ENCODE measurements at regions of chr6 and their contacts with region 1.

Region 1: DNA sequence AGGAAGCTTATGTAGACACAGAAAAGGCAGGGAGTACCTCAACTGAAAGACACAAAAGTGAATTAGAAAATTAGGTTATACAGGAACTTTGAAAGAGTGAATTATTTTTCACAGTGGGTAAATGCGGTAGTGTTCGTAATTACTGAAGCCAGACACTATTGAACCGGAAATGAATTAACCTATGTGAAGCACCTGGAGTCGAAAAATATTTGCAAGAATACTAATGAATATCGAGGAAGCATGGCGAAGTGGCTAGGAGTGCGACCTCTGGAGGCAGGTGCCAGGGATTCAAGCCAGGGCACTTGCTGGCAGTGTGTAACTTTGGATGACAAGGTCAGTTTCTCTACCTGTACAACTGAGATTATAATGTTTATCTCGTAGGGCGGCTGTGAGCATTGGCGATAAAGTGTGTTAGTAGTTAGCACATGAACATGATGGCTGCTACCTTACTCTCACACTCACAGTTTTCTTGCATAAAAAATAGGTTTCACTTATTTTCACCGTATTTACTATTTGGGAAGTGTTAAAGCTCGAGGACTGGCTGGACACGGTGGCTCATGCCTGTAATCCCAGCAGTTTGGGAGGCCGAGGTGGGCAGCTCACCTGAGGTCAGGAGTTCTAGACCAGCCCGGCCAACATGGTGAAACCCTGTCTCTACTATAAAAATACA is 567 bp upstream of the SLC18B1 start:
- DNase-seq: peak; percentile 84
- H3K4me3 Mint-ChIP-seq: no peak overlapping the region
- H3K27ac Mint-ChIP-seq: no peak overlapping the region
- H3K4me1 Mint-ChIP-seq: peaks cover 19% of the 10 kb centered on the region
- H3K27me3 Mint-ChIP-seq: no peaks in the 10 kb centered on the region

Region 2: DNA sequence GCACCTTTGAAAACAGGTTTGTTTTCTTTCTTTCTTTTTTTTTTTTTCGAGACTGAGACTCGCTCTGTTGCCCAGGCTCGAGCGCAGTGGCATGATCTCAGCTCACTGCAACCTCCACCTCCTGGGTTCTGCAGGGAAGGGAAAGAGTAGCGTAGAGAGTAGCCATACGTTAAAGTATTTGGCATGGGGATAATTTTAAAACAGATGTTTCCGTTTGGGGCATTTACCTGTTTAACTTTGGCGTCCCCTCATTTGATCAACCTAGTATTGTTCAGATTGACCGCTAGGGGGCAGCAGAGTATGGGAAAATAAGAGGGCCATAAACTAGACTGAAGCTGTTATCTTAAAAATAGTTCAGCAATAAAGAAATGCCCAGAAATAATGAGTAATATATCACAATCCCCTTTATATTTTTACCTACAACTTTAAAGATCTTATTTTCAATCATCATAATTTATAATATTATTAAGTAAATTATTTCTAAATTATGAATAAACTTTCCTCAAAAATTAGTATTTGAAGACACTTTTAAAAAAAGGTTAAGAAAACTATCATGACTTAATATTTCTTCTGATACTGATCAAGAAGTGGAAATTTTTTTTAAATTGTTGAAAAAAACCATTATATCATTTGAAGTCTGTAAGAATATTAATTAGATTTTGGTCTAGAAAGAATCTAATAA is 268.6 kb before region 1 on chr6:
- CTCF ChIA-PET with region 1: interaction called, 15 read pairs
- POLR2A ChIA-PET with region 1: no interaction called
- intact Hi-C with region 1: loop called (anchors 1 kb)
- DNase-seq: peak; percentile 69
- H3K4me3 Mint-ChIP-seq: no peak overlapping the region
- H3K27ac Mint-ChIP-seq: no peak overlapping the region
- H3K4me1 Mint-ChIP-seq: no peaks in the 10 kb centered on the region
- H3K27me3 Mint-ChIP-seq: peaks cover 7% of the 10 kb centered on the region

Region 3: DNA sequence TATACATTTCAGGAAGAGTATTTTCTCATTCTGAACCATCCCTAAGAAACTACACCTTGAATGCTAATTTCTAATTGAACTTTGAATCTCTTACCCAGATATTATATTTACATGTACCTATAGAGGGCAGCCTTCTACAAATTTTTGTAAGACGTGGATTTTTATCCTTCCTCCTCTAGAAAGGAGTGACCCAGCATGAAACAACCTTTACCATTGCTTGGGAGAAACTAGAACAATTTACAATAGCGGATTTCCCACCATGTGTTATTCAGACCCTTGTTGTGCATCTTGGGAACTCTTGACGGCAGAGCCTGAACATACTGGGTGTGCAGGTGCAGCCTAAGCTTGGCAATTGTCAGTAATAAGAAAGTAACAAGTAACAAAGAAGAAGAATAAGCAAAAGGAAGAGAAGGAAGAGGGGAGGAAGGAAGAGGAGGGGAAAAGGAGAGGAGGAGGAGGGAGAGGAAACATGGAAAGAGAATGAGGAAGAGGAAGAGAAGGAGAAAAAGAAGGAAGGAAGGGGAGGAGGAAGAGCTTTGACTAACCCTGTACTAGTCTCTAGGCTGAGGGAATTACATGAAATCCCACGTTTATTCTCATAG is 129.2 kb before region 1 on chr6:
- CTCF ChIA-PET with region 1: interaction called, 39 read pairs
- POLR2A ChIA-PET with region 1: no interaction called
- intact Hi-C with region 1: loop called (anchors 1 kb)
- DNase-seq: no peak
- H3K4me3 Mint-ChIP-seq: no peak overlapping the region
- H3K27ac Mint-ChIP-seq: no peak overlapping the region
- H3K4me1 Mint-ChIP-seq: peaks cover 4% of the 10 kb centered on the region
- H3K27me3 Mint-ChIP-seq: peaks cover 5% of the 10 kb centered on the region

Region 4: DNA sequence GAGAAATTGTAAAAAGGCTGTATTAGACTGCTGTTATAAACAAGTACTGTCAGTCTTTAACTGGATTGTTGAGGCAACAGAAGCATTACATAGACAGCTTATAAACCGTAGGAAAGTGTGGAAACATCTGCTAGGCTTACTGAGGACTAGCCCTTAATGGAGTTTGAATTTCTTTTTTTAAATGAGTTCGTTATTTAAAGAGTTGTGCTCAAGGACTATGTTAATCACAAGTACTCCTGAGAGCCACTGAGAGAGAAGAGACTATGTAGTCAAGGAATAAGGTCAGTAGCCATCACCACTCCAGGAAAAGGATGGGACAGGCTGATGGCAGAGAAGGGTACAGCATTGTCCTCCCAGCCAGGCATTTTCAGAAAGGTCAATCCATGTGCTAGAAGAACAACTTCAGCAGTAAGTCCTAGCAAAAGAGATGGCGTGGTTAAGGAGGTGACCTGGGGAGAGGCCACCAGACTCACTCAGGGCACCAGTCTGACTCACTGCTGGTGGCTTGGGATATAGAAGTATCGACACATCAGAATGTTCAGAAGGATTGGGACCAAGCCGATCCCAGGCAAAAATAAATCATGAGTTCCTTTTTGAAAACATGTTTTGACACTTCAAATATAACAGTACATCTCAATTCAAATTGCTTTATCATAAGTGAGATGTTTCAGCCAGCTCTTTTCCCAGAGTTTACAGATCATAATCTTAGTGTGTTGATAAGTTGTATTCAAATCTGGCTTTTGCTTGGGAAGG is 21.8 kb after region 1 on chr6:
- CTCF ChIA-PET with region 1: interaction called, 21 read pairs
- POLR2A ChIA-PET with region 1: interaction called, 76 read pairs
- intact Hi-C with region 1: no loop called
- DNase-seq: no peak
- H3K4me3 Mint-ChIP-seq: no peak overlapping the region
- H3K27ac Mint-ChIP-seq: peak overlapping the region; percentile 64
- H3K4me1 Mint-ChIP-seq: peaks cover 50% of the 10 kb centered on the region
- H3K27me3 Mint-ChIP-seq: no peaks in the 10 kb centered on the region

Region 5: DNA sequence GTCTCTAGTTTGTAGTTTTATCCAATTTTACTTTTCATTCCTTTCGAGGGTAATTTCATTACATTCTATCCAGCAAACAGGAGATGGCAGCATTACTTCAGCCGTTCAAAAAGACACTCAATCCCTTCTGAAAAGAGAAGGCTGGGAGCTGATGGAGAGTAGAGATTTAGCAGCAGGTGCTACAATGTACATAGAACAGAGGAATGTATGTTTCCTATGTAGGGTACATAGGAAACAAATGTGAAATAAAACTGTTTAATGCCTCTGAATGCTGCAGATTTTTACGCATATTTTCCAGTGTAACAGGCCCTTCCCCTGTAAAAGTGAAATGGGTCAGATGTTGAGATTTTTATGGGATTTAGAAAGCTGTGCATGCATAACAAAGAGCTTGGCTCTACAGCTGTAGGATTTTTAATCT is 31.3 kb after region 1 on chr6:
- CTCF ChIA-PET with region 1: interaction called, 14 read pairs
- POLR2A ChIA-PET with region 1: no interaction called
- intact Hi-C with region 1: no loop called
- DNase-seq: no peak
- H3K4me3 Mint-ChIP-seq: no peak overlapping the region
- H3K27ac Mint-ChIP-seq: no peak overlapping the region
- H3K4me1 Mint-ChIP-seq: no peaks in the 10 kb centered on the region
- H3K27me3 Mint-ChIP-seq: no peaks in the 10 kb centered on the region